Mammary epithelial cell (primary cell): ENCODE measurements at regions of chr14 and their contacts with region 1.

Region 1: DNA sequence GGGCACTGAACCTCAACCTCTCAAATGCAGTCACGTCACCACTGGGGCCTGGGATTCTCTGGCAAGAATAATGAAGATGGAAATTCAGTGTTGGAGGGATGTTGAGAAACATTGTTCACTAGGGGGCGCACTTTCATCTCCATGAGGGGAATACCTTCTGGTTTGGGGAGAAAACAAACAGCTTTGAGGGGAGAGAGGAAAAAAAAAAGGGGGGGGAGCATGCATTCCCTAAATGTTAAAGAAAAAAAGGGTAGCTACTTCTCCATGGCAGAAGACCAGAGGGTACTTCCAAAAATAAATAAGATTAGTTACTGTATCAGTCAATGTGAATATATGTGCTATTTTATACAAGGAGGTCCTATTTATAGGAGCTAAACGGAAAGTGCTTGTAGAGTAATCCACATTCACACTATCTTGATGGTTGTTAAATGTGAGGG is 5.8 kb upstream of the TBPL2 start:
- DNase-seq: peak; percentile 67
- H3K4me3 ChIP-seq: no peak overlapping the region
- H3K27ac ChIP-seq: peak overlapping the region; percentile 56
- H3K4me1 ChIP-seq: peaks cover 33% of the 10 kb centered on the region
- H3K27me3 ChIP-seq: no peaks in the 10 kb centered on the region
- CTCF ChIP-seq: peak; percentile 53 to 74

Region 2: DNA sequence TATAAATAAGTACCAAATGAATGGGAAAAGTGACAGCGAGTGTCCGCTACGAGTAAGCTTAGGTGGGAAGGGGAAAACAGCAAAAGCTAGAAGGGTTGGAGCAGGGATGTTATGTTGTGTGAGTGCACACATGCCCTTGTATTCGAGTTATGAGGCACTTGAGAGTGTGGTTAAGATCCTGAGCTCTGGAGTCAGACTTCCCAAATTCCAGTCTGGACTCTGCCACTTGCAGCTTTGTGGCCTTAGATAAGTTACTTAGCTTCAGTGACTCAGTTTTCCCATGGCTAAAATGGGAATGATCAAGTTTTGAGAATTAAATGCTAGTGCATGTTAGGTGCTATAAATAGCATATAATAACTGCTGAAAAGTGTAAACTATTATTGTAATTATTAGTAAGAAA is 178.7 kb after region 1 on chr14:
- CTCF ChIA-PET with region 1: no interaction called
- dilution Hi-C with region 1: no loop called
- in situ Hi-C with region 1: no loop called
- intact Hi-C with region 1: loop called (anchors 5 kb)
- DNase-seq: no peak
- H3K4me3 ChIP-seq: no peak overlapping the region
- H3K27ac ChIP-seq: no peak overlapping the region
- H3K4me1 ChIP-seq: no peaks in the 10 kb centered on the region
- H3K27me3 ChIP-seq: no peaks in the 10 kb centered on the region
- CTCF ChIP-seq: no peak

Region 3: GRCh38 chr14:55707365-55707804 is 261.1 kb after region 1 on chr14:
- CTCF ChIA-PET with region 1: interaction called, 3 read pairs
- dilution Hi-C with region 1: no loop called
- in situ Hi-C with region 1: no loop called
- intact Hi-C with region 1: loop called (anchors 1 kb)
- DNase-seq: peak; percentile 47
- H3K4me3 ChIP-seq: no peak overlapping the region
- H3K27ac ChIP-seq: no peak overlapping the region
- H3K4me1 ChIP-seq: peaks cover 18% of the 10 kb centered on the region
- H3K27me3 ChIP-seq: no peaks in the 10 kb centered on the region
- CTCF ChIP-seq: peak; percentile 69 to 73